ENCODE measurements at regions of chr1 and their contacts with region 1.

Region 1: DNA sequence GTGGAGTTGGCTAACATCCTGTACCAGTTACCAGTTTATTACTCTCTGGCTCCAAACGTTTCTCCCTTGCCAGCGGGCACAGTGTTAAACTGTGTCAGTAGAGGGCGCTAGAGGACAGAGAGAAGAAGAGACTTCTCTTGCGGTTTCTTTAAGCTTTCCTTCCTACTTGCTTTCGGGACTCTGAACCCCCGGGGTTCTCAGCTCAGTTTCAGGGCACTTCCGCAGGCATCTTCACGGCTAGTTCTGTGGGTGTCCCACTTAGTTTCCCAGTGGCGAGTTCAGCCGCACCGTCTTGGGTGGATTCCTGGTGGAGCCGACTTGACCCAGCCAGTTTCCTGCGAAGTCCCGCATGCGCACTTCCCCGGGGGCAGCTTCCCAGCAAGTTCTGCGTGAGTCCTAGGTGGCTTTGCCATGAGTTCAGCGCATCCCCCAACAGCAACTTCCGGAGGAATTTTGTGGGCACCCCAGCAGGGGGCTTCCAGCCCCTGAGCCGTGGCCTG is 37.9 kb upstream of the BTG2 start:
- DNase-seq: peak; percentile 50 to 89
- H3K4me3 ChIP-seq: peak overlapping the region; percentile 50 to 70 (median 56)
- H3K27ac ChIP-seq: no peak overlapping the region
- H3K4me1 ChIP-seq: peaks cover 0 to 3% (median 1%) of the 10 kb centered on the region in 4 experiments; a peak in 2 of 7 replicates
- H3K27me3 ChIP-seq: peaks cover 0 to 4% (median 2%) of the 10 kb centered on the region in 4 experiments; a peak in 4 of 7 replicates
- CTCF ChIP-seq: peak; percentile 42 to 90 (median 87)
- EP300 ChIP-seq: no peak
- POLR2A ChIP-seq: no peak
- RAD21 ChIP-seq: peak; percentile 75 to 85

Region 2: DNA sequence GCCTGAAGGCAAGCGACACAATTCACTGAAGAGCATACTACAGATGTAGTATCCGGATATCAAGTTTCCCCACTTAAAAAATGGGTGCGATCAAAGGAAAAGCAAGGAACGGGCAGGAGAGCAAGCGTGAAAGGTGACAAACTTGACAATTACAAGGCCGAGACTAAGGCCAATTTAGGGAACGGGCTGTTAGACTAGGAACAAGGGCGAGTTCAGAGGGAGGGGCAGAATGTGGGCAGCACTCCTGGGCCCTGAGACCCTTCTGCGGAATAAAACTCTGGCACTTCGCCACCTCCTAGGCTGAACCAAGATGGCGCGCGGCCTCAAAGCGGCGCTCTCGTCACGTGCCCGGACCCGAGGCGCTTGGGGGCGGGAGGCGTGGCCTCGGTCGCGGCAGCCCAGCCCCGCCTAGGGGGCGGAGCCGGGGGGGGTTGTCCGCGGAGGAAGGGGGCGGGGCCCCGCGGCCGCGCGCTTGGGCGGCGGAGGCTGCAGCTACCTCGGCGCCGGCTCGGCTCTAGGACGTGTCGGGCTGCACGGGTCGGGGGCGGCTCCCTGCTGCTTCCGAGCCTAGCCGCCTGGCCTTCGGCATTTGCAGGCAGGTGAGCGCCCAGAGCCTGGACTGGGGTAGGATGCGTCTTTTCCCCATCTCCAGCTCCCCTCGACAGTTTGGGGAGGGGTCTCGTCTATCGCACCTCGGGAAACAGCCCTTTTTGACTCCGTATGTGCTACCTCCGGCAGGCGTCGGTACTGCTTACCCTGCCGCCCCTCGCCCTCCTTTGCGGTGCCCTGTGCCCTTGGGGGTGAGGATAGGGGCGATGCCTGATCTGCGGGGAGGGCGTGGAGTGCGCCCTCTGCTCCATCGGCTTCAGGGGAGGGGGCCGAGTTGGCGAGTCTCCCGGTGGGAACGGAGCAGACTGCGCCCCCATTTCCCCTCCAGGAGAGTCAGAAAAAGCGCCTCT is 241.1 kb before region 1 on chr1 and contains the start of gene PPFIA4:
- CTCF ChIA-PET with region 1: interaction called, 48 read pairs
- POLR2A ChIA-PET with region 1: interaction called, 3 read pairs
- DNase-seq: peak; percentile 73 to 97
- H3K4me3 ChIP-seq: peak within 1 kb of the TSS; percentile 51 to 88 (median 87)
- H3K27ac ChIP-seq: no peak within 1 kb of the TSS
- H3K4me1 ChIP-seq: peaks cover 4 to 13% (median 6%) of the 10 kb centered on the region in 4 experiments
- H3K27me3 ChIP-seq: peaks cover 7 to 26% (median 18%) of the 10 kb centered on the region in 4 experiments
- CTCF ChIP-seq: peak in 1 of 3 experiments; percentile 28; a peak in 1 of 4 replicates
- EP300 ChIP-seq: 0 out of 3 replicates have a peak, but pooled peaks of 1 of the 2 experiments have one; percentile 26
- POLR2A ChIP-seq: peak; percentile 74 to 79
- RAD21 ChIP-seq: peak in 1 of 2 experiments; percentile 11; a peak in 1 of 4 replicates
- total RNA-seq, gene PPFIA4: 7.0 and 9.9 TPM in 2 replicates

Region 3: GRCh38 chr1:203084588-203085502 is 182.6 kb before region 1 on chr1:
- CTCF ChIA-PET with region 1: interaction called, 55 read pairs
- POLR2A ChIA-PET with region 1: no interaction called
- DNase-seq: peak; percentile 47 to 92
- H3K4me3 ChIP-seq: no peak overlapping the region
- H3K27ac ChIP-seq: no peak overlapping the region
- H3K4me1 ChIP-seq: peaks cover 9 to 14% (median 11%) of the 10 kb centered on the region in 4 experiments
- H3K27me3 ChIP-seq: 0 out of 7 replicates have a peak, but pooled peaks cover 0 to 2% (median 0%) of the 10 kb centered on the region in 4 experiments
- CTCF ChIP-seq: peak; percentile 90 to 96 (median 96)
- EP300 ChIP-seq: no peak
- POLR2A ChIP-seq: no peak
- RAD21 ChIP-seq: peak; percentile 68 to 77

Region 4: GRCh38 chr1:203127666-203128430 is 139.5 kb before region 1 on chr1 and contains the start of gene ADORA1:
- CTCF ChIA-PET with region 1: interaction called, 131 read pairs
- POLR2A ChIA-PET with region 1: no interaction called
- DNase-seq: peak in 1 of 2 experiments; percentile 82
- H3K4me3 ChIP-seq: peak within 1 kb of the TSS; percentile 16 to 64 (median 56)
- H3K27ac ChIP-seq: no peak within 1 kb of the TSS
- H3K4me1 ChIP-seq: peaks cover 3 to 22% (median 13%) of the 10 kb centered on the region in 4 experiments
- H3K27me3 ChIP-seq: peaks cover 5 to 32% (median 18%) of the 10 kb centered on the region in 4 experiments
- CTCF ChIP-seq: peak in 2 of 3 experiments; percentile 14 to 17; a peak in 2 of 4 replicates
- EP300 ChIP-seq: no peak
- POLR2A ChIP-seq: 0 out of 3 replicates have a peak, but pooled peaks of 1 of the 2 experiments have one; percentile 31
- RAD21 ChIP-seq: peak; percentile 6 to 16; a peak in 2 of 4 replicates
- total RNA-seq, gene ADORA1: 3.3 and 3.5 TPM in 2 replicates

Region 5: GRCh38 chr1:203172128-203173010 is 95.0 kb before region 1 on chr1:
- CTCF ChIA-PET with region 1: interaction called, 31 read pairs
- POLR2A ChIA-PET with region 1: no interaction called
- DNase-seq: peak; percentile 68 to 92
- H3K4me3 ChIP-seq: no peak overlapping the region
- H3K27ac ChIP-seq: no peak overlapping the region
- H3K4me1 ChIP-seq: peaks cover 0 to 7% (median under 1%) of the 10 kb centered on the region in 4 experiments; a peak in 3 of 7 replicates
- H3K27me3 ChIP-seq: no peaks in the 10 kb centered on the region
- CTCF ChIP-seq: peak; percentile 97 to 99 (median 97)
- EP300 ChIP-seq: no peak
- POLR2A ChIP-seq: no peak
- RAD21 ChIP-seq: peak; percentile 82 to 90

Region 6: GRCh38 chr1:203229471-203230135 is 37.8 kb before region 1 on chr1 and contains the start of gene CHIT1:
- CTCF ChIA-PET with region 1: interaction called, 15 read pairs
- POLR2A ChIA-PET with region 1: no interaction called
- DNase-seq: no peak
- H3K4me3 ChIP-seq: no peak within 1 kb of the TSS
- H3K27ac ChIP-seq: no peak within 1 kb of the TSS
- H3K4me1 ChIP-seq: no peaks in the 10 kb centered on the region
- H3K27me3 ChIP-seq: no peaks in the 10 kb centered on the region
- CTCF ChIP-seq: no peak
- EP300 ChIP-seq: no peak
- POLR2A ChIP-seq: no peak
- RAD21 ChIP-seq: no peak
- total RNA-seq, gene CHIT1: not detected in 2 replicates

Region 7: GRCh38 chr1:203390298-203390697 is 122.9 kb after region 1 on chr1:
- CTCF ChIA-PET with region 1: no interaction called
- POLR2A ChIA-PET with region 1: no interaction called
- DNase-seq: no peak
- H3K4me3 ChIP-seq: no peak overlapping the region
- H3K27ac ChIP-seq: no peak overlapping the region
- H3K4me1 ChIP-seq: no peaks in the 10 kb centered on the region
- H3K27me3 ChIP-seq: no peaks in the 10 kb centered on the region
- CTCF ChIP-seq: no peak
- EP300 ChIP-seq: no peak
- POLR2A ChIP-seq: no peak
- RAD21 ChIP-seq: no peak

Region 8: DNA sequence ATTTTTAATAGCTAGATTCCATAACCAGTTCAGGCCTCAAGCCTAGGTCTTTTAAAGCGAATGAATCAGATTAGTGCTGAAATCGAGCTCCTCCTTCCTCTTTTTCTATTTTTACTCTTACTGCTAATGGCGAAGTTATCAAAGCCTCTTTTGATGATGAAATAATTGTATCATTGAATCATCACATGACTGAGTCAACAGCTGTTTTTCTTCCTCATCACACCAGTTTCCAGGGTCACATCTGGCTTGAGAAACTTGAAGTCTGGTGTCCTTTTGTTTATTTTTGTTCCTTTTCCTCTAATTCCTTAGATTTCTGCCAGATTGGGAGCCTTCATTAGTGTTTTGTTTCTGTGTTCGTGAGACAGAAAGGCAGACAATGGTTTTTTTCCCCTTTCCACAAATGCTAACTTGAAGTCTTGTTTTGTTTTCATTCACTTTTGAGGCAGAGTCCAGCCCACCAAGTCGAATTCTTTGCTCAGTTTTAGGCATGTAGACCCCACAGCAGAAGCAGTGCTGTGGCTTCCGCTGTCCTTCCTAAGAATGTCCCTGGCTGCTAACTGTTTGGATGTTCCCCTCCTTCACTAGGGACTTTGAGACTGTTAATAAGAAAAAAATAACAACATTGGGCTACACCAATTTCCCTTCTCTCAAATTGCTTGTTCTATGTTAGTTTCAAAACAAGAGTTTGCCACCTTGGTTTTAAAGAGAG is 135.4 kb after region 1 on chr1:
- CTCF ChIA-PET with region 1: no interaction called
- POLR2A ChIA-PET with region 1: no interaction called
- DNase-seq: no peak
- H3K4me3 ChIP-seq: no peak overlapping the region
- H3K27ac ChIP-seq: no peak overlapping the region
- H3K4me1 ChIP-seq: peaks cover 0 to 2% (median 0%) of the 10 kb centered on the region in 4 experiments; a peak in 2 of 7 replicates
- H3K27me3 ChIP-seq: no peaks in the 10 kb centered on the region
- CTCF ChIP-seq: no peak
- EP300 ChIP-seq: no peak
- POLR2A ChIP-seq: no peak
- RAD21 ChIP-seq: no peak